Colonic mucosa (tissue), 4 donors: ENCODE measurements at regions of chr20 and their contacts with region 1.

Region 1: GRCh38 chr20:49132995-49133478 is 55.1 kb downstream of the STAU1 start:
- DNase-seq: peak; percentile 43
- H3K4me3 ChIP-seq: no peak overlapping the region
- H3K27ac ChIP-seq: no peak overlapping the region
- H3K4me1 ChIP-seq: no peaks in the 10 kb centered on the region
- H3K27me3 ChIP-seq: no peaks in the 10 kb centered on the region
- CTCF ChIP-seq: peak; percentile 41

Region 2: DNA sequence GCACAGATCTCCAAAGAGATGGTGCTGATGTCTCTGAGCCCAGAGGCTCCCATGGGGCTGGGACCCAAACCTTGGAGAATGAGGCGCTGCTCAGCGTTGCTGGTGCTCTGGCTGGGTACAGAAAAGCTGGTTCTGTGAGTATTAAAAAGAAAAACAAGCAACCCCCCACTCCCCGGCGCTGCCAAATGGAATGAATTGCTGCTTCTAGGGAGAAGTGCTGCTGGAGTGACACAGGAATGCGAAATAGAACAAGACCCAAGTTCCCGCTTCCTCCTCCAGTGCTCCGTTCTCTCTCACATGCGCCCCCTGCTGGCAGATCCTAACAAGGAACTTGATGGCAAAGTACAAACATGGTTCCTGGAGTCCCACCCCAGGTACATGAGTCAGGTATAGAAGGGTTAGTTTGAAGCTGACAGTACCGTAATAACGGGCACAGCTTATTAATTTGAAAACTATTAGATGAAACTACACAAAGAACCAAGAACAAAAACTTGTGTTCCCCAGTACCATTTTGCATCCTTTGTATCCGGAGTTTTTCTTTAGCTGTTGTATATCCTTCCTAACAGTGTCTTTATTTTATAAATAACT is 84.0 kb after region 1 on chr20:
- intact Hi-C with region 1: loop called (anchors 2 kb)
- DNase-seq: peak; percentile 99
- H3K4me3 ChIP-seq: no peak overlapping the region
- H3K27ac ChIP-seq: no peak overlapping the region
- H3K4me1 ChIP-seq: peaks cover 5% of the 10 kb centered on the region
- H3K27me3 ChIP-seq: no peaks in the 10 kb centered on the region
- CTCF ChIP-seq: peak; percentile 87

Region 3: DNA sequence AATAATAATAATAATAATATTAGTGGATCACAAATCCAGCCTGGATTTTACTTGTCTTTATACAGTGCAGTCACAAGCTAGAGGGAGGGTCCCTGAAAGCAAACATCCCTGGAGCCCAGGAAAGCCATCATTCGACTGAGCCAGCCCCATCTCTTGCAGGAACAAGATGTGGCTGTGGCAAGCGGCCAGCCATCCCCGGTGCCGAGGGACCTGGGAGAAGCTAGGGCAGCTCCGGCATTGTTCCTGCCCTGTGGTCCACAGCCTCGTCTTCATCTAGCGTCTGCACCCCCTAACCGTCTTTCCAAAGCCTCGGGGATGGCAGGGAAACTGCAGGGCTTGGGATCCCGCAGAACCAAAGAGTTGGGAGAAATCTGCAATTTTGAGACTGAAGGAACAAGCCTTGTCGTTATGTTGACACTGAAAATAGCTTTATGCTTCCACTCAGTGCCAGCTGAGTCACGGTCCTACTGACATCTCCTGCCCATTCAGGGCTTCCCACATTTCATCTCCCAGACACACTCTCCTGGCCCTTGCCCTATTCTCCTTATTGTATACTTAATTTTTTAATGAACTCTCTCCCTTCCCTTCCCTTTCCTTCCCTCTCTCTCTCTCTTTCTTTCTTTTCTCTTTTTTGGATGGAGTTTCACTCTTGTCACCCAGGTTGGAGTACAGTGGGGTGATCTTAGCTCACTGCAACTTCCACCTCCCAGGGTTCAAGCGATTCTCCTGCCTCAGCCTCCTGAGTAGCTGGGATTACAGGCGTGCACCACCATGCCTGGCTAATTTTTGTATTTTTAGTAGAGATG is 207.3 kb after region 1 on chr20:
- intact Hi-C with region 1: no loop called
- DNase-seq: no peak
- H3K4me3 ChIP-seq: no peak overlapping the region
- H3K27ac ChIP-seq: no peak overlapping the region
- H3K4me1 ChIP-seq: no peaks in the 10 kb centered on the region
- H3K27me3 ChIP-seq: no peaks in the 10 kb centered on the region
- CTCF ChIP-seq: no peak